Activated CD8-positive, alpha-beta T cell treated with anti-CD3 and anti-CD28 coated beads, Interleukin-2, amount 10 ng/mL, durations not matched to agents 7 days and 5 days (primary cell): ENCODE measurements at regions of chr20 and their contacts with region 1.

Region 1: DNA sequence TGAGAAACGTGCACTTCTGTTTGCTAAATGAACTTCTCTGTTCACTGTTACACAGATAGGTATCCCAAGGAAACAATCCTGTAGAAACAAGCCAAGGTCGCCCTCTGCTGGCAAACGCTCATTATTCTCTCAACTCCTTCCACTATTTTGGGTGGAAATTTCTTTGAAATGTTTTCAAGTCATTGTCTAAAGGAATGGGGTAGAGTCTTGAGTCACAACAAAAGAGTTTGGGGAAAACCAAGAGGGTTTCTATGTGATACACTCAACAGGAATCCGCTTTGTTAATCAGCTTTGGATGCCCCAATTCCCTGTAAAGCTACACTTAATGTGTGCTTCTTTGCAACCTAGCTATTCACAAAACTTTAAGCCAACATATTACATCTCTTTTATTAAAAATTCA is 4.6 kb upstream of the RAE1 start:
- DNase-seq: peak; percentile 81
- ATAC-seq: no peak
- H3K4me3 Mint-ChIP-seq: no peak overlapping the region
- H3K27ac Mint-ChIP-seq: no peak overlapping the region
- H3K4me1 Mint-ChIP-seq: peaks cover 6% of the 10 kb centered on the region
- H3K27me3 Mint-ChIP-seq: peaks cover 13% of the 10 kb centered on the region

Region 2: GRCh38 chr20:57089691-57090150 is 256.8 kb before region 1 on chr20:
- CTCF ChIA-PET with region 1: interaction called, 27 read pairs
- POLR2A ChIA-PET with region 1: no interaction called
- DNase-seq: peak; percentile 71
- ATAC-seq: peak; percentile 87
- H3K4me3 Mint-ChIP-seq: no peak overlapping the region
- H3K27ac Mint-ChIP-seq: no peak overlapping the region
- H3K4me1 Mint-ChIP-seq: no peaks in the 10 kb centered on the region
- H3K27me3 Mint-ChIP-seq: peaks cover 1% of the 10 kb centered on the region

Region 3: GRCh38 chr20:57329608-57330221 is 16.8 kb before region 1 on chr20 and contains the start of gene SPO11:
- CTCF ChIA-PET with region 1: interaction called, 15 read pairs
- POLR2A ChIA-PET with region 1: no interaction called
- DNase-seq: no peak
- ATAC-seq: no peak
- H3K4me3 Mint-ChIP-seq: no peak within 1 kb of the TSS
- H3K27ac Mint-ChIP-seq: no peak within 1 kb of the TSS
- H3K4me1 Mint-ChIP-seq: no peaks in the 10 kb centered on the region
- H3K27me3 Mint-ChIP-seq: peaks cover 42% of the 10 kb centered on the region
- total RNA-seq, gene SPO11: not detected

Region 4: DNA sequence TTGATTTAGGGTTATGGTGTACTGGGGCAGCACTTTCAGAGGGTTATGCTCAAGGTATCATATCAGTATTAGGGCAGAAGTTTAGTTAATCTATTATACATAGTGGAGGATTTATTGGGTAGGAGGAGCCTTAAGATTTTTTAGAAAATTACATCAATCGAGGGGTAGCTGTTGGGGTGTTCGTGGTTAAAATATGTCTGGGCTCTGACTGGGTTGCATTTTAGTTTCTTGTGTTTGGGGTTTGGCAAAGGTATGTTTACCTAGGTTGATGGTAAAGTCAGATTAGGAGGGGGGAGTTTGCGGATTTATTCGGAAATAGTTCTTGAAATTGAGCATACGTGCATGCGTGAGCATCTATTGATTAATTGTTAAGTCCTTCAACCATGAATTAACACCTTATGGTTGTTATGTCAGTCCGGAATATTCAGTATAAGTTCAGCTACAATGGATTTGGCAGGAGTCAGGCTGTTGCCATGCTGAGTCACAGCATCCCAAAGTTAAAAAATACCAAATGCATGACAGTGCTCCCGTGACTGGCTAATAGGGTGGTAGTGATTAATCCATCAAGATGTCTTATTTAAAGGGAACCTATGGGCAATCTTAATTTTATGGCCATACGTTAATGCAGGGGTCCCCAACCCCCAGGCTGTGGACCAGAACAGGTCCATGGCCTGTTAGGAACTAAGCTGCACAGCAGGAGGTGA is 14.9 kb after region 1 on chr20:
- CTCF ChIA-PET with region 1: interaction called, 23 read pairs
- POLR2A ChIA-PET with region 1: no interaction called
- DNase-seq: peak; percentile 1
- ATAC-seq: no peak
- H3K4me3 Mint-ChIP-seq: no peak overlapping the region
- H3K27ac Mint-ChIP-seq: no peak overlapping the region
- H3K4me1 Mint-ChIP-seq: no peaks in the 10 kb centered on the region
- H3K27me3 Mint-ChIP-seq: no peaks in the 10 kb centered on the region